ENCODE measurements at regions of chr17 and their contacts with region 1.

Region 1: GRCh38 chr17:82051776-82052637 is at the starts of genes GPS1 and RFNG:
- DNase-seq: peak; percentile 68 to 87 (median 80)
- ATAC-seq: peak; percentile 95 to 96
- H3K4me3 Mint-ChIP-seq: peak within 1 kb of the TSS; percentile 78 to 91 (median 83)
- H3K27ac Mint-ChIP-seq: peak within 1 kb of the TSS; percentile 31 to 89 (median 80)
- H3K4me1 Mint-ChIP-seq: peaks cover 0 to 34% (median 17%) of the 10 kb centered on the region in 4 donors
- H3K27me3 Mint-ChIP-seq: no peaks in the 10 kb centered on the region
- polyA plus RNA-seq, gene GPS1: 122 to 140 (median 126) TPM
- polyA plus RNA-seq, gene RFNG: 2.2 to 8.5 (median 4.8) TPM

Region 2: GRCh38 chr17:82037113-82037888 is 14.7 kb before region 1 on chr17 and contains the start of gene DCXR:
- POLR2A ChIA-PET with region 1: interaction called, 23 read pairs
- DNase-seq: peak; percentile 90 to 97 (median 93)
- ATAC-seq: peak; percentile 92 to 93
- H3K4me3 Mint-ChIP-seq: peak within 1 kb of the TSS; percentile 81 to 96 (median 91)
- H3K27ac Mint-ChIP-seq: peak within 1 kb of the TSS; percentile 66 to 95 (median 91)
- H3K4me1 Mint-ChIP-seq: peaks cover 15 to 31% (median 28%) of the 10 kb centered on the region in 4 donors
- H3K27me3 Mint-ChIP-seq: no peaks in the 10 kb centered on the region
- polyA plus RNA-seq, gene DCXR: 113 to 185 (median 127) TPM

Region 3: DNA sequence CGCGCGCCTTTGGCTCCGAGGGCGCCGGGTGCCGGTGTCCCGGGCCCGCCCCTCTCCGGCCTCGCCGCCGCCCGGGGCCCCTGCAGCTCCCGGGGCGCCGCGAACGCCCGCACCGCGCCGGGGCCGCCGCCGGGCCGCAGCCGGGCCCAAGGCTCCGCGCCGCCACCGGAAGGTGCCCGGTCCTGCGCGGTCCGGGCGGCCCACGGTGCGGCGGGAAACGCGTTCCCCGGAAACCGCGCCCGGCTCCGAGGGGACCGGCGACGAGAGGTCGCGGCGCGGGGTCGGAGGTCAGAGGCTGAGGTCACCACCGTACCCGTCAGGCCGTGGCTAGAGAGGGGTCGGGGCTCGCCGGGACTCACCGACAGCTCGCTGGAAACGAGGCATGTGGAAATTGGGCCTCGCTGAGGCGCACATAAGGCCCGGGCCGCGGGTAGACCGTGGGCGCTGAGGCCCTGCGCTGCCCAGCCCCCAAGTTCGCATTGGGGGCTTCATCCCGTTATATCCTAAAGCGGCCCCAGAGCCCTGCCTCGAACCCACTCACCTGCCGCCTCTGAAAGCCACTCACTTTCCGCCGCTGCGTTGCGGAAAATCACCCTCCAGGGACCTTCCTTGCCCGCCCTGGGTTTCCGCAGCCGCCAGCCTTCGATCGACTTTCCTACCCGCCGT is 13.8 kb after region 1 on chr17 and contains the start of gene DUS1L:
- POLR2A ChIA-PET with region 1: interaction called, 38 read pairs
- DNase-seq: peak; percentile 44 to 78 (median 69)
- ATAC-seq: peak; percentile 86 to 88
- H3K4me3 Mint-ChIP-seq: peak within 1 kb of the TSS; percentile 76 to 88 (median 84)
- H3K27ac Mint-ChIP-seq: peak within 1 kb of the TSS; percentile 81 to 97 (median 92)
- H3K4me1 Mint-ChIP-seq: peaks cover 0 to 29% (median 12%) of the 10 kb centered on the region in 4 donors
- H3K27me3 Mint-ChIP-seq: no peaks in the 10 kb centered on the region
- polyA plus RNA-seq, gene DUS1L: 68.6 to 167 (median 92.1) TPM

Region 4: DNA sequence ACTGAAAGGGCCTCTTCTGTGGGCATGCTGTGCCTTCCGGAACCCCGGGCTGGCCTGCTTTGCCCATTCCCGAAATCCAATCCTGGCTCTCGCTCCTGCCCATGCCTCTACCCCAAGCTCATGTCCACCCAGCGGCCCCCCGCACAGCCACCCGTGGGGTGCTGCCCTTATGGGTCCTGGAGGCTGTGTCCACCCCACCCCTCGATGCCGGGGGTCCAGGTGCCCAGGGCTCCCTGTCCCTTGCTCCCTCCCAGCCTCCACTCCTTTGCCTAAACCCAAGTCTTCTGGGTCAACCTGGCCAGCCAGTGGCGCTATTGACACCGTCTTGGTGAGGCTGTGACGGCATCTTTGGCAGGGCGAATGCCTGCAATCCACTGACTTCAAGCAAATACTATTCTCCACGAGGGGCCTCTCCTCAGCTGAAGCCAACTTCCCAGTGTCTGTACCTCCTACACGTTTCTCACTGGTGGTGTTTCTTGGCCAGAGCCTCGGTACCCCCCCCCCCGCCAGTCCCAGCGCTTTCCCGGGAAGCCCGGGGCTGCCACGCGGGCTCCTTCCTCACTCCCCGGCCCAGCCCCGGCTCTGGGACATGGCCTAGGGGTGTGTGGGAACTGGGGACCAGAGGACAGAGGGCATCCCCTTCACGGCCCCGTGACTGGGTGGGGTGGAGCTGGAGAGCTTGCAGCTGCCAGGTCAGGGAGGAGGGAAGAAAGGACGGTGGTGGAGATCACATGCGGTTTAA is 25.8 kb after region 1 on chr17:
- POLR2A ChIA-PET with region 1: no interaction called
- DNase-seq: no peak
- ATAC-seq: peak in 1 of 2 donors; percentile 14
- H3K4me3 Mint-ChIP-seq: no peak overlapping the region
- H3K27ac Mint-ChIP-seq: peak overlapping the region in 1 of 10 donors; percentile 71
- H3K4me1 Mint-ChIP-seq: no peaks in the 10 kb centered on the region
- H3K27me3 Mint-ChIP-seq: no peaks in the 10 kb centered on the region

Region 5: DNA sequence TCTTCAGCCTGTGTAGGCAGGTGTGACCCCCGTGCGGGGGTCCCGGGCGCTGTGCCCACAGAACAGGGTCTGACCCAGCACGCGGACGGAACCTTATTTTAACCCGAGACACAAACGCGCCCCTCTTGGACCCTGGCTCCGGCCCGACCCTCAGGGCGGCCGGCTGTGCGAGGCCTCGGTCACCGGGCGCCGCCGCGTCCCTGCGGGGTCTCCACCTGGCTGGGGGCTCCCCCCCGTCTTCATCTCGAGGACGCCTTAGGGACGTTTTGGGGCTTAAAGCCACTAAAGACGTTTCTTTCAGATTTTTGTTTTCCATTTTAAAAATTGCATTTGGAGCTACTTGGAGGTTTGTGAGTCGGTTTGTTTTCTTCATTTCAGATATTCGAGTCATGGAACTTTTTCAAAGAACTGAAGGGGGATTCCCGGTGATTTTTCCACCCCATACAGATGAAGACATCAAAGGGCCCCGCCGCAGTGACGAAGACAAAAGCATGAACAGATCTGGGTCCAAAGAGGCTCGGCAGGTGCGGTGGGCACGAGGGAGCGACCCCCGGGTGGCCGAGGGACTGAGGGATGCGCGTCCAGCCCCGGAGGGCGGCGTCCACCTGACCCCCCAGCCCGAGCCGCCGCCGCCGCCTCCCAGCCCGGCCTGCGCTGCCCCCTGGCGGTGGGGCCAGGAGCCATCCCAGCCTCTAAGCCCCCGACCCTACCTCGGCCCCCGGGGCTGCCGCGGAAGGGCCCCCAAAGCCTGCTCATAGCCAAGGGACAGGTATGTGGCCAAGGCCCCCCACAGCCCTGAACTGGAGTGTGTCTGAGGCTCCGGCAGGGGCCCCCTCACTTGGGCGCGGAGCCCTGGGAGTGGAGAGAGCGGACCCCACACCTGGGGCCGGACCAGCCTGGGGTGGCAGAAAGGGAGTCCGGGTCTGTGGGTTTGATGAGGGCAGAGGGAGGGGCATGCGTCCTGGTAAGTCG is 269.2 kb after region 1 on chr17:
- POLR2A ChIA-PET with region 1: no interaction called
- DNase-seq: peak; percentile 54 to 92 (median 82)
- ATAC-seq: peak; percentile 55 to 62
- H3K4me3 Mint-ChIP-seq: peak overlapping the region; percentile 63 to 86 (median 80)
- H3K27ac Mint-ChIP-seq: peak overlapping the region; percentile 49 to 97 (median 90)
- H3K4me1 Mint-ChIP-seq: peaks cover 6 to 21% (median 14%) of the 10 kb centered on the region in 4 donors
- H3K27me3 Mint-ChIP-seq: no peaks in the 10 kb centered on the region